Common myeloid progenitor, CD34-positive (primary cell): ENCODE measurements at regions of chr17 and their contacts with region 1.

Region 1: DNA sequence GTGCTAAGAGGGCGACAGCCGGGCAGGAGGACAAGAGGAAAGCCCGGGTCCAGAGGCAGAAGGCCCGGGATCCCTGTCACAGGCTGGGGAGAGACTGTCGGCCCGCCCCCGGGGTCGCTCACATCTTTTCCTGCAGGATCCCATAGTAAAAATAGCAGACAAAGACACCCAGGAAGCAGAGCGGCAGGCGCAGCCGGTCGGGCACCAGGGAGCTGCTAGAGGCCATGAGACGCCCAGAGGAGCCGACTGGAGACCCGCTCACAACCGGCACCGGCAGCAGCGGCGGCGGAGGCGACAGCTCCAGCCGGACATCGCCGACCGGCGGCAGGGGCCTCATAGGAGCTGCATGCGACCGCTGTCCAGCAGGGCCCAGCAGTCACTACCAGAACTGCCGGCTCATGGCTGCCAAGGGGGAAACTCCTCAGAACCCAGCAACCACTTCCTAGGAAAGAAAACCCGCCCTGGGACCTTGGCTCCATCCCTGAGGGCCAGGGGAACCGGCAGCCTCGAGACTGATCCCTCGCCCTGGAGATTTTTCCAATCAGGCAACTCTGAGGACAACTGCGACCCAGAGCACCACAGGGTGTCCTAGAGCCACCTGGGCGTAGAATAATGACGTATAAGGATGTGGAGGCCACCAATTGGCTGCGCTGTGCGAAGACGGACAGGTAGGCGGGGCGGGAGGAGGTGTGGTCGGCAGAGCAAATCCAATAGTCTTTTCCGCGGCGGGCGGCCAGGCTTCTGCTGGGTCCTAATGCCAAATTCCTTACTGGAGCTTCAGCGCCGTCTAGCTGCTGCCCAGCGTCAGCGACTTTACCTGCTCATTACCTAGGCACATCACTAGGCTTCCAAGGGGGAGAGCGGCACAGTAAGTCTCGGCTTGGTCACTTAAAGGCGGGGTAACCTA is at the start of gene SLC35B1:
- DNase-seq: peak; percentile 99 to 100 (median 100)
- H3K4me3 ChIP-seq: peak within 1 kb of the TSS; percentile 77 to 95 (median 87)
- H3K27ac ChIP-seq: peak within 1 kb of the TSS; percentile 98 to 99
- H3K4me1 ChIP-seq: peaks cover 6 to 52% (median 31%) of the 10 kb centered on the region in 4 experiments
- H3K27me3 ChIP-seq: no peaks in the 10 kb centered on the region

Region 2: DNA sequence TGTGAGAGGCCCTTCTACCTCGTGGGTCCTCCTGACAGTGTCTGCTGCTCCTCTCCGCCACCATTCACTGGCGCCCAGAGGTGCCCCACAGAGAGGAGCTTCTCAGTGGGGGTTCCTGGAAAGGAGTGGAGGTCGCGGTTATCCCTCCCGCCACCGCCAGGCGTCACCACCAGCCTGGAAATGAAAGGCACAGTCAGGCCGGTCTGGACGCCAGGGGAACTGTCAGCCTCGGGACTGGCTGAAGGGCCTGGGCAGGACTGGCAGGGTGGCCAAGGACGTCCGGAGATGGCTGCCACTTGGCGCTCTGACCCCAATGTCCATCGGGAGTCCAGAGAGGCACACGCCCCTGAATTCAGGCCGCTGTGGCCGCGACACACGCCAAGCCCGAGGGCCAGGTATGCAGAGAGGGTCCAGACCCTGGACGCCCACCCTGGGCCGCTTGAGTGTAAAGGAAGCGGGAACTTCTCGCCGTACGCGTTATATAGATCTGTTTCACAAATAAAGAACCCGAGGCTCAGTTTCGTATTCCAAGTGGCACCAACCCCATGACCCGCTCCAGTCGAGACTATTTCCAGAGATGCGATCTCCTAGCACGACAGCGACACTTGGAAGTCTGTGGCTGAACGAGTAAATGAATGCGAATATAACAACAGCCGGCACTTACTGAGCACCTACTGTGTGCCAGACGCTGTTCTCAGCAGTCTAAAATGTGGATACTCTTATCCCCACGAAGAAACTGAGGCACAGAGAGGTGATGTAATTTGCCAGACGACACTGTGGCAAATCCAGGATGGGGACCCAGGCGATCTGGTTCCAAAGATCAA is 139.8 kb before region 1 on chr17:
- CTCF ChIA-PET with region 1: interaction called, 277 read pairs
- POLR2A ChIA-PET with region 1: interaction called, 5 read pairs
- DNase-seq: peak; percentile 69 to 83 (median 82)
- H3K4me3 ChIP-seq: peak overlapping the region in 6 of 7 experiments; percentile 36 to 82 (median 62)
- H3K27ac ChIP-seq: no peak overlapping the region
- H3K4me1 ChIP-seq: peaks cover 0 to 30% (median 23%) of the 10 kb centered on the region in 4 experiments
- H3K27me3 ChIP-seq: peaks cover 0 to 14% (median 7%) of the 10 kb centered on the region in 5 experiments

Region 3: DNA sequence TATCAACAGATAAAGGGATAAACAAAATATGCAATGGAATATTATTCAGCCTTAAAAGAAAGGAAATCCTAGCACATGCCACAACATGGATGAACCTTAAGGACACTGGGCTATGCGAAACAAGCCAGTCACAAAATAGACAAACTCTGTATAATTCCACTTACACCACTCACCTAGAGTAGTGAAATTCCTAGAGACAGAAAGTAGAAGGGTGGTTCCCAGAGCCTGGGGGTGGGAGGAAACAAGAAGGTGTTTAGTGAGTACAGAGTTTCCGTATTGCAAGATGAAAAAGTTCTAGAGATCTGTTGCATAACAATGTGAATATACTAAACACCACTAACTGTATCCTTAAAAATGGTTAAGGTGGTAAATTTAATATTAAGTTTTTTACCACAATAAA is 40.0 kb before region 1 on chr17:
- CTCF ChIA-PET with region 1: no interaction called
- POLR2A ChIA-PET with region 1: no interaction called
- DNase-seq: no peak
- H3K4me3 ChIP-seq: no peak overlapping the region
- H3K27ac ChIP-seq: no peak overlapping the region
- H3K4me1 ChIP-seq: peaks cover 0 to 5% (median 3%) of the 10 kb centered on the region in 4 experiments
- H3K27me3 ChIP-seq: no peaks in the 10 kb centered on the region

Region 4: DNA sequence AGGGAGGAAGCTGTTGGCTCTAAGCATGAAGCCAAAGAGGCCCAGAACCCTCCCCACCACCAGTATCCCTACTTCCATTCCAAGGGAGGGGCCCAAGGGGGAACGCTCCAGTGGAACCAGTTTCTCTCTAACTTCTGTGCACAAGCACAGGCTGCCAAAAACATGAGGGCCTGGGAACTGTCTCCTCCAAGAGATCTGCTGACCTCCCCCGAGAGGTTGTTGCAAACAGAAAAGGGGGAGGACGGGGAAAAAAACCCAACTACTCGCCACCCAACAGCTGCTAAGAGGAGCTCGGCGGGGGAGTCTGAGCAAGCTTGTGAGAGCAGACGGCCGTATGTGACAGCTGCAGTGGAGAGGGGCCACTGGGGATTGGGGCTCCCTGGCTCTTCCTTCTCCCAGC is 15.6 kb after region 1 on chr17:
- CTCF ChIA-PET with region 1: interaction called, 68 read pairs
- POLR2A ChIA-PET with region 1: interaction called, 3 read pairs
- DNase-seq: no peak
- H3K4me3 ChIP-seq: no peak overlapping the region
- H3K27ac ChIP-seq: peak overlapping the region; percentile 21 to 67
- H3K4me1 ChIP-seq: peaks cover 0 to 24% (median 15%) of the 10 kb centered on the region in 4 experiments
- H3K27me3 ChIP-seq: no peaks in the 10 kb centered on the region

Region 5: GRCh38 chr17:49739641-49740271 is 31.9 kb after region 1 on chr17:
- CTCF ChIA-PET with region 1: interaction called, 14 read pairs
- POLR2A ChIA-PET with region 1: interaction called, 11 read pairs
- DNase-seq: peak; percentile 99 to 100 (median 100)
- H3K4me3 ChIP-seq: peak overlapping the region in 6 of 7 experiments; percentile 20 to 64 (median 54)
- H3K27ac ChIP-seq: peak overlapping the region; percentile 91 to 95
- H3K4me1 ChIP-seq: peaks cover 60 to 86% (median 77%) of the 10 kb centered on the region in 4 experiments
- H3K27me3 ChIP-seq: no peaks in the 10 kb centered on the region

Region 6: DNA sequence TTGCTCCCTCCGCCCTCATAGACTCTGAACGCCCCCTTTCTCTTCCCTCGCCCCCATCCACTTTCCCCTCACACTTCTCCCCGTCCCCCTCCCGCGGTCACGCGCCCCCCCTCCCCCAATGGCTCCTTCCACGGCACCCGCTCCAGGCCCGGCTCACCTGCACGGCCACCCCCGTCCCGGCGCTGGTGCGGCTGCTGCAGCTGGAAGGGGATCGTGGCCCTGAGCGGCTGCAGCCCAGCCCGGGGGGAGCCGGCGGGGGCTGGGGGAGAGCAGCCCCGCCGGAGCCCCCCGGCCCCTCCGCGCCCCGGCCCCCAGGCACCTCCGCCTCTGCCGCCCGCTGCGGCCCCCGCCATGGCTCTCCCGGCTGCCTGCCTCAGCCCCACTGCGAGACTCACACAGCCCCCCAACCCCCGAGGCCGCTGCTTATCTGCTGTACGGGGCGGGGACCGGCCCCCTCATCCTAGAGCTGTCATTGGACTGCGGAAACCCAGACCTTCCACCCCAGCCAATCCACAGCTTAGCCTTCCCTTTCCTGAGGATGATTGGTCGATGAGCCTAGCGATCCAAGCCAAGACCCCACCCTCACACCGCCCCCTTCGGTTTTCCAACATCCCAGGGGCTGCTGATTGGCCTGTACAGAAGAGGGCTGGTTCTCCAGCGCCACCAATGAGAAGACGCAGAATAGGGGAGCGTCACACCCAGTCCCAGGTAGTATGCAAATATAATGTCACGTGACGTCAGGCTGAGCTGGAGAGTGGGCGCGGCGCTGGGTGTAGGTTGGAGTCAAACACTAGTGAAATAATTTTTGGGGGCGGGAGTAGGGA is 56.1 kb after region 1 on chr17 and contains the start of gene FAM117A:
- CTCF ChIA-PET with region 1: interaction called, 7 read pairs
- POLR2A ChIA-PET with region 1: interaction called, 24 read pairs
- DNase-seq: peak; percentile 100
- H3K4me3 ChIP-seq: peak within 1 kb of the TSS; percentile 77 to 99 (median 94)
- H3K27ac ChIP-seq: peak within 1 kb of the TSS; percentile 71 to 84
- H3K4me1 ChIP-seq: peaks cover 30 to 47% (median 39%) of the 10 kb centered on the region in 4 experiments
- H3K27me3 ChIP-seq: no peaks in the 10 kb centered on the region

Region 7: GRCh38 chr17:49861150-49861892 is 153.5 kb after region 1 on chr17:
- CTCF ChIA-PET with region 1: no interaction called
- POLR2A ChIA-PET with region 1: no interaction called
- DNase-seq: peak; percentile 49 to 72 (median 66)
- H3K4me3 ChIP-seq: no peak overlapping the region
- H3K27ac ChIP-seq: no peak overlapping the region
- H3K4me1 ChIP-seq: peaks cover 0 to 17% (median 14%) of the 10 kb centered on the region in 4 experiments
- H3K27me3 ChIP-seq: peaks cover 0 to 18% (median 4%) of the 10 kb centered on the region in 5 experiments

Region 8: GRCh38 chr17:50312308-50312707 is 604.4 kb after region 1 on chr17:
- CTCF ChIA-PET with region 1: no interaction called
- POLR2A ChIA-PET with region 1: no interaction called
- DNase-seq: no peak
- H3K4me3 ChIP-seq: no peak overlapping the region
- H3K27ac ChIP-seq: no peak overlapping the region
- H3K4me1 ChIP-seq: no peaks in the 10 kb centered on the region
- H3K27me3 ChIP-seq: peaks cover 0 to 5% (median 0%) of the 10 kb centered on the region in 5 experiments